ENCODE measurements at regions of chrX and their contacts with region 1.

Region 1: GRCh38 chrX:101415180-101416145 is 7.4 kb downstream of the HNRNPH2 start:
- DNase-seq: peak; percentile 64
- ATAC-seq: peak; percentile 67
- H3K4me3 ChIP-seq: no peak overlapping the region
- H3K27ac ChIP-seq: peak overlapping the region; percentile 77
- H3K4me1 ChIP-seq: peaks cover 16% of the 10 kb centered on the region
- H3K27me3 ChIP-seq: no peaks in the 10 kb centered on the region
- CTCF ChIP-seq: peak; percentile 82

Region 2: DNA sequence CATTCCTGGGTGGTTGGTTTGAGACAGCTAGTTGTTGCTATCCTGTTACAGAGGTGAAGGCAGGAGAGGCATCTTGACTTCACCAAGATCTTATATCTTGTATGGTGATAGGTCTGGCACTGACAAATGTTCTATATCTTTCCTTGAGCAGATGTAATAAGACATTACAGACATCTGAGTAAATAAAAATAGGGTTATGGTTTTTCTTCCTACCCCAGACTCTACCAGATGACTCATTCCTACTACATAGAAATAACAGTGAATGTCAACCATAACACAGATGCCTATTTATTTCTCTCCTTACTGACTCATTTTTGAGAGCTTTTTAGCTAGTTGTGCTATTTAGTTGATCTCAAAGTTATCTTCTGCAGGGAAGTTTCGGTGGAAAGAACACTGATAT is 14.5 kb after region 1 on chrX:
- CTCF ChIA-PET with region 1: no interaction called
- POLR2A ChIA-PET with region 1: interaction called, 17 read pairs
- in situ Hi-C with region 1: no loop called
- intact Hi-C with region 1: no loop called
- DNase-seq: no peak
- ATAC-seq: no peak
- H3K4me3 ChIP-seq: no peak overlapping the region
- H3K27ac ChIP-seq: no peak overlapping the region
- H3K4me1 ChIP-seq: no peaks in the 10 kb centered on the region
- H3K27me3 ChIP-seq: no peaks in the 10 kb centered on the region
- CTCF ChIP-seq: no peak

Region 3: DNA sequence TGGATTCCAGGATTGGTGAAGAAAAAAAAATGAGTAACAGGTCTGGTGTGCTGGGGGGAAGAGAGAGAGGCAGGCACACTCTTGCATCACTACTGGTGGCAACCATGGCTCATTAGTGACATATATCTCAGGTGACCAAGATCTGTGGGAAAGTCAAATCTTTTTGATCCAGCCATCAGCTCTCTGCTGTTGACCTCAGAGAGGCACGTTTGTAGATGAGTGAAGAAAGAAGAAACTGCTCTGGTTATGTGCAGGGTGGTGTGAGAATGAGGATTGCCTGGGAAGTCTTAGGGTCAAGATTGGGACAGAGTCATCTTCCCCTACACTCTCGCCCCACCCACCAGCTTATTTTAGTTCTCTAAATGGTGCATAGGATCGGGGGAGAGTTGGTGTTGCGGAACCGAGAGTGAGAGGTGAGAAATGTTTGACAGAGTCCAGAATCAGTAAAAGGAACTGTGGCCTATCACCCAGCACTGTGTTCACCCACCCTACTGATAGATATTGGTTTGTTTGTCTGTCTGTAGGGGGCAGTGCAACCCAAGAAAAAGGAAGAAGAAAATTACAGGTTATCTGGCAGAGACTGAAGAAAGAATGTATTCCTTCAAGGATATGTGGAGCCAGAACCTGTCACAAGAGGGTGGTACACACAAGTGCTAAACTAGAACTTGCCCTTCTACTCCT is 180.4 kb after region 1 on chrX:
- CTCF ChIA-PET with region 1: interaction called, 3 read pairs
- POLR2A ChIA-PET with region 1: no interaction called
- in situ Hi-C with region 1: no loop called
- intact Hi-C with region 1: loop called (anchors 10 kb)
- DNase-seq: peak; percentile 33
- ATAC-seq: peak; percentile 88
- H3K4me3 ChIP-seq: no peak overlapping the region
- H3K27ac ChIP-seq: no peak overlapping the region
- H3K4me1 ChIP-seq: no peaks in the 10 kb centered on the region
- H3K27me3 ChIP-seq: peaks cover 11% of the 10 kb centered on the region
- CTCF ChIP-seq: peak; percentile 71

Region 4: DNA sequence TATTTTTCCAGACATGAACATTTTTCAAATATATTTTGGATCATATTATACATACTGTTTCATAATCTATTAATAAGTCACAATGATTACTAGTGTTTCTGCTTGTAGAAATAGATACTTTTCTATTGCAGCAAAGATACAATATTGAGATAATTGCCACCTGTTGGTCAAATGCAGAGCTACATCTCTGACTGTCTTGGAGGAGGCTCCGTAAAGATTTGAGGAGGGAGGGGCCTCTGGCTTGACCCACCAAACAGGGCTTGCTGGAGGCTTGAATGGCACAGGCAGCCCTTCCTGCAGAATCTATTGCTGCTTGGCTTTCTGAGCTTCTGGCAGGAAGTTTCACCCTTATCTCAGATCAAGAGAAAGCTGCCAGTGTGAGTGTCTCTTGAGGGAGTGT is 343.5 kb after region 1 on chrX:
- CTCF ChIA-PET with region 1: no interaction called
- POLR2A ChIA-PET with region 1: no interaction called
- in situ Hi-C with region 1: no loop called
- intact Hi-C with region 1: no loop called
- DNase-seq: no peak
- ATAC-seq: peak; percentile 76
- H3K4me3 ChIP-seq: no peak overlapping the region
- H3K27ac ChIP-seq: no peak overlapping the region
- H3K4me1 ChIP-seq: no peaks in the 10 kb centered on the region
- H3K27me3 ChIP-seq: no peaks in the 10 kb centered on the region
- CTCF ChIP-seq: peak; percentile 52

Region 5: DNA sequence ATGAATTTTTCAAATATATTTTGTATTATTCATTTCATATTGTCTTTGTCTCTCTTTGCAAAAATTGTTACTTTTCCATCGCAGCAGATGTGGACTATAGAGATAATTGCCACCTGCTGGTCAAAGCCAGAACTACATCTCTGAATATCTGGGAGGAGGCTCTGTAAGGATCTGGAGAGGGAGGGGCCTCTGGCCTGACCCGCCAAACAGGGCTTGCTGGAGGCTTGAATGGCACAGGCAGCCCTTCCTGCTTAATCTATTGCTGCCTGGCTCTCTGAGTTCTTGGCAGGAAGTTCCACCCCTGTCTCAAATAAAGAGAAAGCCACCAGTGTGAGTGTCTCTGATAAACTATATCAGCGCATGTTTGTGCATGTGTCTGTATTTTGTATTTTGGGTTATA is 383.9 kb after region 1 on chrX:
- CTCF ChIA-PET with region 1: no interaction called
- POLR2A ChIA-PET with region 1: no interaction called
- in situ Hi-C with region 1: no loop called
- intact Hi-C with region 1: loop called (anchors 1 kb)
- DNase-seq: peak; percentile 61
- ATAC-seq: peak; percentile 100
- H3K4me3 ChIP-seq: peak overlapping the region; percentile 21 to 23
- H3K27ac ChIP-seq: no peak overlapping the region
- H3K4me1 ChIP-seq: no peaks in the 10 kb centered on the region
- H3K27me3 ChIP-seq: no peaks in the 10 kb centered on the region; the same call in 1 of the 2 replicates
- CTCF ChIP-seq: peak; percentile 77